ENCODE measurements at regions of chr20 and their contacts with region 1.

Region 1: GRCh38 chr20:2849529-2849928 is 9.0 kb downstream of the VPS16 start:
- DNase-seq: no peak
- ATAC-seq: no peak
- H3K4me3 ChIP-seq: no peak overlapping the region
- H3K27ac ChIP-seq: no peak overlapping the region
- H3K4me1 ChIP-seq: no peaks in the 10 kb centered on the region
- CTCF ChIP-seq: no peak
- EP300 ChIP-seq: no peak
- POLR2A ChIP-seq: no peak
- RAD21 ChIP-seq: no peak

Region 2: GRCh38 chr20:2759603-2760296 is 89.8 kb before region 1 on chr20:
- CTCF ChIA-PET with region 1: interaction called, 170 read pairs
- POLR2A ChIA-PET with region 1: no interaction called
- DNase-seq: no peak
- ATAC-seq: no peak
- H3K4me3 ChIP-seq: no peak overlapping the region
- H3K27ac ChIP-seq: no peak overlapping the region
- H3K4me1 ChIP-seq: peaks cover 4% of the 10 kb centered on the region; the same call in 1 of the 3 replicates
- CTCF ChIP-seq: no peak
- EP300 ChIP-seq: no peak
- POLR2A ChIP-seq: no peak
- RAD21 ChIP-seq: no peak

Region 3: DNA sequence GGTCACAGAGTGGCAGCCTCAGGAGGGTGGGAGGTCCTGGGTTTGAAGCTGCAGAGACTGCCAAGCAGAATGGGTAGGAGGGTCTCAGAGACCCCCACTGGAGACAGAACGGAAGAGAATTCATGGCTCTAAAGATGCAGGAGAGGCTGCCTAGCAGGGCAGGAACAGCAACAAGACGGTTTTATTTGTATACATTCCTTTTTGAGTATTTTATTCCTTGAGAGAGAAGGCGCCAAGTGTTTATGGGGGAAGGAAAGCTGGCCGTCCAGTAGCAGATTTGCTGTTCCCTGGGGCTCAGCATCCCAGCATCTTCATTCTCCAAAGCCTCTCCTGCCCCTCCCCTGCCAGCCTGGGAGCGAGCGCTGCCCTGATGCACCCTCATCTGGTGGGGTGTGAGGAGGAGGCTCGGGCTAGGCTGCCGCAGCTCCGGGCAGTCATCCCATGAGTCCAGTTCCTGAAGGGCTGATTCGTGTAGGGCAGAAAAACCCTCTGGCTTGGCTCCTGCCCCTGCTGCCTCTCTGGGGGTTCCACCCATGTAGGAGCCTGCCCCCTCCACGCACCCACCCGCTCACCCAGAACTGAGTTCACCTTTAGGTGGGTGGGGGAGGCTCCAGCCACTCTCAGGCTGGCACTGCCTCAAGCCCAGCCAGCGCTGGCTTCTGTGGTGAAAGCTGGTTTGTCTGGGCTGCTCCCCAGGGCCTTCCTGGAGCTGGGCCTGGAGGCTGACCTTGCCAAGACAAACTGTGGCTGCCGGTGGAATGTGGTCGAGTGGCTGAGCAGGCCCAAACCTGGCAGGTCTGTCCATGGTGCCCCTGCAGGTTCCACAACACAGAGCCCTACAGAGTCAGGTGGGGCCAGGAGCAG is 81.5 kb before region 1 on chr20:
- CTCF ChIA-PET with region 1: interaction called, 15 read pairs
- POLR2A ChIA-PET with region 1: no interaction called
- DNase-seq: no peak
- ATAC-seq: peak; percentile 36 to 52; a peak in 3 of 6 replicates
- H3K4me3 ChIP-seq: no peak overlapping the region
- H3K27ac ChIP-seq: no peak overlapping the region
- H3K4me1 ChIP-seq: no peaks in the 10 kb centered on the region
- CTCF ChIP-seq: no peak
- EP300 ChIP-seq: no peak
- POLR2A ChIP-seq: no peak
- RAD21 ChIP-seq: no peak

Region 4: DNA sequence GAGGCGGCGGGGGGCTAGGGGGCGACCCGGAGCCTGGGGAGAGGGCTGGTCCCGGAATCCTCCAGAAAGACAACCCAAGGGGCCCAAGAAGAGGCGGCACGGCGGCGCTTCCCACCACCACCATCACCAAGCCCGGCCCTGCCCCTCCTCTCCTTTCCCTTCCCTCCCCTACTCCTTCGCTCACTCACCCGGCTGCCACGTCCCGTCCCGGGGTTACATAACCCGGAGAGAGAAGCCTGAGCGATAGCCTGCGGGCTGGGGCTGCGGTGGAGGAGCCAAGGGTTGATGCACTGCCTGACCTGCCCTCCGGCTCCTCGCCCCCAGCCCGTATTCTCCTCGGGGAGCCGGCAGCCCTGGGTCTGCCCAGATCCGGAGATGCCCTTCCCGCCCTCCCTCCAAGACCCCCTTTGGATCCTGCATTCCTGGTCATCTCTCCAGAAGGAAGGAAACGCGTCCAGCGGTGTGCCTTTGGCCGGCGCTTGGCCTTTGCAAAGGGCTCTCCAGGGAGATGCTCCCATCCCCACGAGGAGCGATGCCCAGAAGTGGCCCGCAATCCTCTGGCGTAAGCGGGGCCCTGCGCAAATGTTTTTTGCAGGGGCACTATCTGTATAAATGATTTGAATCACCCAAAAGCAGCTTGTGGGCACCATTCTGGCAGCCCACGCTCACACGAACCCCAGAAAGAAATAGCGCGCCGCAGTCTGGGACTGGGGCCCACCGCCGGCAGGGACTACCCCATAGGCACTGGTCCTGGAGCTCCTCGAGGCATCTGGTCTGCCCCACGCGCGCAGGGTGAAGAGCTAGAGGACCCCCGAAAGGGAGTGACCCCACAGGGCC is 44.5 kb before region 1 on chr20:
- CTCF ChIA-PET with region 1: interaction called, 12 read pairs
- POLR2A ChIA-PET with region 1: no interaction called
- DNase-seq: no peak
- ATAC-seq: peak; percentile 47 to 56; a peak in 3 of 6 replicates
- H3K4me3 ChIP-seq: no peak overlapping the region
- H3K27ac ChIP-seq: no peak overlapping the region
- H3K4me1 ChIP-seq: peaks cover 8% of the 10 kb centered on the region; the same call in 2 of the 3 replicates
- CTCF ChIP-seq: no peak
- EP300 ChIP-seq: no peak
- POLR2A ChIP-seq: no peak
- RAD21 ChIP-seq: no peak

Region 5: DNA sequence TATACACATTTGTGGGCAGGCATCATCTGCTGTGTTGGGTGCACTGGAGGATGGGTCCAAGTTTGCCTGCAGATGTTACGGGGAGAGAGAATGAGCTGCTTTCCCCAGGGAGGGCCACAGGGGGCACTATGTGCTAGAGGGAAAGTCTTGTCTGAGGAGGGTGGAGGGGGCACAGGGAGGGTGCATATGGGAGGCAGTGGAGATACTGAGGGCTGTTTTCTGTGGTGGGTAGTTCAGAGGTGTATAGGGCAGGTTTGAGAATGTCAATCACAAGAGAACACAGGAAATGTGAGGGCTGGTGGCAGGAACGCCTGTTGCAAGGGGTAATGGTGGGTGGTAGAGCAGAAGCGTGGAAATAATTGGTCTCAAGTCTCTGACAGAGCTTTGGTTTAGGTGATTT is 16.1 kb after region 1 on chr20:
- CTCF ChIA-PET with region 1: interaction called, 21 read pairs
- POLR2A ChIA-PET with region 1: no interaction called
- DNase-seq: no peak
- ATAC-seq: peak in 1 of 2 experiments; percentile 35; a peak in 2 of 6 replicates
- H3K4me3 ChIP-seq: no peak overlapping the region
- H3K27ac ChIP-seq: no peak overlapping the region
- H3K4me1 ChIP-seq: peaks cover 15% of the 10 kb centered on the region
- CTCF ChIP-seq: no peak
- EP300 ChIP-seq: no peak
- POLR2A ChIP-seq: no peak
- RAD21 ChIP-seq: peak in 1 of 2 experiments; percentile 37; a peak in 2 of 5 replicates

Region 6: DNA sequence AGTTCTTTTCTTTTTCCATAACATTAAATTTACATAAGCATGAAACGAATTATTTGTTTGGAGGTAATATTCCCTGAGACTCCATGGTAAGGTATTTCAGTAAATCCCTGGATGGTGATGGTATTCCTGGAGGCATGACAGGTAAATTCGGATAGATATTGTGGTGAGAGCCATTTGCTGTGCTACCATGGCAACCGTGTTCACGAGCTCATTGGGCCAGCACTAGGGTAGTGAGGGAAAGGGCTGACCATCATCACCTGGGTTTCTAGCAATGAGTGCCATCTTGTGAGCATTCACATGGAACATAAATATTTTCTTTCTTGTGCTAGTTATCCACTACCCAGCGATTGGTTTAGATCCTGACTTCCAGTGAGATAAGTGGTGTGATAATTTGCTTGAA is 142.0 kb after region 1 on chr20:
- CTCF ChIA-PET with region 1: interaction called, 13 read pairs
- POLR2A ChIA-PET with region 1: no interaction called
- DNase-seq: no peak
- ATAC-seq: no peak
- H3K4me3 ChIP-seq: no peak overlapping the region
- H3K27ac ChIP-seq: no peak overlapping the region
- H3K4me1 ChIP-seq: no peaks in the 10 kb centered on the region
- CTCF ChIP-seq: no peak
- EP300 ChIP-seq: no peak
- POLR2A ChIP-seq: no peak
- RAD21 ChIP-seq: no peak

Region 7: DNA sequence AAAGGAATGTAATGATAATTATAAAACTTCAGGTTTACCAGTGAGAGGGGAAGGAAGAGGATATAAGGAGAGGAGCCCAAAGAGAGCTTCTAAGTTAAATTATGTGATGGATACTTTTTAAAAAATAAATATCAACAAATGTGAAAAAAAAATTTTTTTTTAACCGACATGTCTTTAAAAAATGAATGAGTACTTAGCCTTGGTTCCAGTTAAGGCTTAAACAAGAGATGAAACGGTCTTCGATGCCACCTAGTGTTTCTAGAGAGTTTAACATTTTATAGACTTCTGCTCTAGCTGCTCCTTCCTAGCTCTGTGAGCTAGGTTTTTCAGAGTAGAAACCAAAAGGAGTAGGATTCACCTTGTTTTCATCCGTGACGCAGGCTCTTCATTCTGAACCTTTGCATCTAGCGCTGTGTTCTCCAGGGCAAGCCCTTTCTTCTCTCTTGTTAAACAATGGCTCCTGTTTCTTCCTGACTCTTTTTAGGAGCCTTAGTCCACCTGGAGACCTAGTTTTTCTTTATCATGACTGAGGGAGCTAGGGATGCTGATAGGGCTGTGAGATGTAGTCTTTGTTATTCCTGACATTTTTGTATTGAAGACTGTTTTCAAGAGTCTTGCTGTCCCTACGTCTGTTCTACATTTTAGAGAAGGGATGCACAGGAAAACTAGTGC is 151.5 kb after region 1 on chr20:
- CTCF ChIA-PET with region 1: interaction called, 13 read pairs
- POLR2A ChIA-PET with region 1: no interaction called
- DNase-seq: peak; percentile 60 to 80
- ATAC-seq: peak; percentile 98 to 99
- H3K4me3 ChIP-seq: no peak overlapping the region
- H3K27ac ChIP-seq: no peak overlapping the region
- H3K4me1 ChIP-seq: no peaks in the 10 kb centered on the region
- CTCF ChIP-seq: peak; percentile 92
- EP300 ChIP-seq: no peak
- POLR2A ChIP-seq: no peak
- RAD21 ChIP-seq: peak; percentile 86 to 89

Measured in A549 (cell line).